Activated CD4-positive, alpha-beta T cell treated with anti-CD3 and anti-CD28 coated beads for 36 hours (primary cell): ENCODE measurements at regions of chr17 and their contacts with region 1.

Region 1: DNA sequence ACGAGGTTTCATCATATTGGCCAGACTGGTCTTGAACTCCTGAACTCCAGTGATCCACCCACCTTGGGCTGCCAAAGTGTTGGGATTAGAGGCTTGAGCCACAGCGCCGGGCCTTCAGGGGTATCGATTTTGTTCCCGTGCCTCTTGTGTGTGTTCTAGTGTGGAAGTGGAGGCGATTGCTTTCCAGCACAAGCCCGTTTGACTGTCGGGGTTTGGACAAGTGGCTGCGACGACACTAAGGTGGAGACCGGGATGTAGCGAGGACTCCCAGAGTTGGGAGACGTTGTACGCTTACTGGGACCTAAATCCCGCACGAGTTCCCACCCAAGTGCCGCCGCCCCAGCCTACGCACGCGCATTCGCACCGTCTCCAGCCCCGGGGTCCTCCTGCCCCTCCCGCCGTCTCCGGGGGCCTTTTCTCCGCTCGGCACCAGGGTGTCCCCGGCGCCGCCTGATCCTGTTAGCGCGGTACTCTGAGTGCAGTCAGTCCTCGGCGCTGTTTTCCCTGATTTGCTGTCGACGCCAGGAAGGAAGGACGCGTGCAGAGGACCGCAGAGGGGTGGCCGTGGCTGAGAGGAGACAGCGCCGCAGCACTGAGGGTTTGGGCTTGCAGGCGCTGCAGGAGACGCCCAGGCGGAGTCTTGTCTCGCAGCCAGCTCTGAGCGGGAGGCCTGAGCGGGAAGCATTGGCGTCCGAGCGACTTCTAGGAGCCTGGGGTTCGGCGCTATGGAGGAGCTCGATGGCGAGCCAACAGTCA is at the start of gene NUP85:
- DNase-seq: peak; percentile 96
- ATAC-seq: peak; percentile 86
- H3K4me3 Mint-ChIP-seq: peak within 1 kb of the TSS; percentile 91
- H3K27ac Mint-ChIP-seq: peak within 1 kb of the TSS; percentile 100
- H3K4me1 Mint-ChIP-seq: peaks cover 18% of the 10 kb centered on the region
- H3K27me3 Mint-ChIP-seq: no peaks in the 10 kb centered on the region
- total RNA-seq, gene NUP85: 130 to 160 TPM

Region 2: DNA sequence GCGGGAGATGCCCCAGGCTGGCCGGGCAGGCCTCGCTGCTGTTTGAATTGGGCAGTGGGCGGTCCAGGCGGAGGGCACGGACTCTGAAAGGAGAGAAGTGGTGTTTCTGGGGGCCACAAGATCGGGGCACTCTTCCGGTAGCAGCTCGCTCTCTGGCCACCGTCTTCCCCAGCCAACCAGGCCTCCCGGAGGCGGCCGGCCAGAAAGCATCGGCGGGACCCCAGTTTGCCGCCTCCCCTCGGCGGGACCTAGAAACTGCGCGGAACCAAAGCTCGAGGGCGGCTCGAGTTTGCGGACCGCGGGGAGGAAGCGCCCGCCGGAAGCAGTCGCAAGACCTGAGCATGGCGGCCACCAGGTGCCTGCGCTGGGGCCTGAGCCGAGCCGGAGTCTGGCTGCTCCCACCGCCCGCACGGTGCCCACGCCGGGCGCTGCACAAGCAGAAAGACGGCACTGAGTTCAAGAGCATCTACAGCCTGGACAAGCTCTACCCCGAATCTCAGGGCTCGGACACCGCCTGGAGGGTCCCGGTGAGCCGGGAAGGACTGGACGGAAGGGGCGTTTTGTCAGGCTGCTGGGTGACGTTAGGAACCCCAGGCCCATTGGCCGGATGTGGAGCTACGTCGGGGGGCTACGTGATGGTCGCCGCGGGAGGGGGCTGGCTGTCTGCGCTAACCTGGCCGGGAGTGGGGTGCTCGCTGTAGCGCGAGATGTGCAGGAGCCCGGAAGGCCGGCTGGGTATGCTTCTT is 192.7 kb before region 1 on chr17 and contains the start of gene MRPL58:
- CTCF ChIA-PET with region 1: interaction called, 3 read pairs
- POLR2A ChIA-PET with region 1: interaction called, 12 read pairs
- intact Hi-C with region 1: no loop called
- DNase-seq: peak; percentile 91
- ATAC-seq: peak; percentile 96
- H3K4me3 Mint-ChIP-seq: peak within 1 kb of the TSS; percentile 95
- H3K27ac Mint-ChIP-seq: peak within 1 kb of the TSS; percentile 92
- H3K4me1 Mint-ChIP-seq: peaks cover 31% of the 10 kb centered on the region
- H3K27me3 Mint-ChIP-seq: no peaks in the 10 kb centered on the region
- total RNA-seq, gene MRPL58: 64.6 to 66.5 TPM

Region 3: DNA sequence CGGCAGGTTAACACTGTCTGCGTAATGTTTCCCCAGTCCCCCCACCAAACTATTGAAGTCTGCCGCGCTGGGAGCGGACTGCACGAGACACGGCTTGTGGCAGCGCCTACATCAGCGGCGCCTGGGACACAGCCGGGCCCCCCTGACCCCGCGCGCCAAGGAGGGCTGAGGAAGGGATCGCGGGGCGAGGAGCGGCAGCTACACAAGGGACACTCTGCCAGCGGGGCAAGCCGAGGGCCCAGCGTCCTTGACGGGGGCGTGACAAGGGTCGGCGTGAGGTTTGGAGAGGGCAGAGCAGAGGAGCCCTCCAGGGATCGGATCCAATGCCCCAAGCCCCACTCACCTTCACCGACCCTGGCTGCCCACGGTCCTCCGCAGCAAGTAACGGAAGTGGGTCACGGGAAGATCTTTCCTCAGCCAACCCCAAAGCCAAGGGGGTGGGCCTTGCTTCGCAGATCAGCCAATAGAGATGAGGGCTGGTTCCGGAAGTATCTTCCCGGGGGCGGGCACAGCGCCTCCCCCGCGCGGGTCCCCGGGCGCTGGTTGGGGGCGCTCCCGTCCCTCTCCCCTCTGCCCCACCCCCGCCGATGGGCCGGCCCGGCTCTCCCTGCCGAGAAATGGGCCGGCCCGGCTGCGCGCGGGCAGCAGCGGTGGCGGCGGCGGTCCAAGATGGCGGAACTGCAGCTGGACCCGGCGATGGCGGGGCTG is 158.5 kb before region 1 on chr17 and contains the starts of genes ATP5PD and KCTD2:
- CTCF ChIA-PET with region 1: interaction called, 5 read pairs
- POLR2A ChIA-PET with region 1: no interaction called
- intact Hi-C with region 1: loop called (anchors 1 to 5 kb)
- DNase-seq: peak; percentile 97
- ATAC-seq: peak; percentile 95
- H3K4me3 Mint-ChIP-seq: peak within 1 kb of the TSS; percentile 99
- H3K27ac Mint-ChIP-seq: peak within 1 kb of the TSS; percentile 94
- H3K4me1 Mint-ChIP-seq: peaks cover 37% of the 10 kb centered on the region
- H3K27me3 Mint-ChIP-seq: no peaks in the 10 kb centered on the region
- total RNA-seq, gene ATP5PD: 194 to 237 TPM
- total RNA-seq, gene KCTD2: 15.3 to 16.7 TPM

Region 4: DNA sequence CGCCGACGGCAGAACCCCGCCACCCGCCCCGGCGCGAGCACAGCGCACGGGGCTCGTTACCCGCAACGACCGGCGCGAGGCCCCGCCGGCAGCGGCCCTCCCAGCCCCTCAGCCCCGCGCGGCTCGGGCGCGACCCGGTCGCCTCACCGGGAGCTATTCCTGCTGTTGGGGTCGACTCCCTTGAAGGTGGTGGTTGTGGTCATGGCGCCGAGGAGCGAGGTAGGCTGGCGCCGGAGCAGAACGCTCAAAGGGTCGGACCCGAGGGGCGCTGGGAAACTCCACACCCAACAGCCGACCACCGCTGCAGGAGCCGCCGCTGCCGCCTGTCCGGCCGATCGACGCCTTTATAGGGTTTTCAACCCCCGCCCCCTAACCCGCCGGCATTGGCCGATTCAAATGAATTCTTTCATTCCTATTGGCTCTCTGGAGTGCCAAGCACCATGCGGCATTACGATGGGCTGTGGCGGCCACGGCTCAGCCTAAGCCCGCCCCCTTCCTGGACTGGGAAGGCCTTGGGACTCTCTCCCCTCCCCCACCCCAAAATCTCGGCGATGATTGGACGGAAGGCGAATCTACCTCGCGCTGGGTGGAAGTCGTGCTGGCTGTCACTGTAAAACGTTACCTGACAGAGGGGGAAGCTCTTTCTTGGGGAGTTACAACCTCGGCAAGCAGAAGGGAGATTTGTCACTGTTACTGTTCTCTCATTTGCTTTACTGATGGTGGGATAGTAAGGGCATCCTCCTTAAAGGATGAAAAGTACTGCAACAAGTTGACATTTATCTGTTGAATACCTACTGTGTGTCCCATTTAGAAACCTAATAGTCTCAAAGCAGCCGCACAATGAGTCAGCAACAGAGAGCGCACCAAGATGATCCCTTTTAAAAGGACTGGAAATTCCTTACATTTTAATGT is 50.8 kb before region 1 on chr17 and contains the start of gene JPT1:
- CTCF ChIA-PET with region 1: interaction called, 3 read pairs
- POLR2A ChIA-PET with region 1: interaction called, 3 read pairs
- intact Hi-C with region 1: loop called in 1 of 2 experiments (anchors 1 kb)
- DNase-seq: peak; percentile 99
- ATAC-seq: peak; percentile 98
- H3K4me3 Mint-ChIP-seq: peak within 1 kb of the TSS; percentile 96
- H3K27ac Mint-ChIP-seq: peak within 1 kb of the TSS; percentile 89
- H3K4me1 Mint-ChIP-seq: peaks cover 36% of the 10 kb centered on the region
- H3K27me3 Mint-ChIP-seq: no peaks in the 10 kb centered on the region
- total RNA-seq, gene JPT1: 234 to 238 TPM

Region 5: GRCh38 chr17:75191584-75191983 is 13.6 kb before region 1 on chr17:
- CTCF ChIA-PET with region 1: interaction called, 42 read pairs
- POLR2A ChIA-PET with region 1: interaction called, 4 read pairs
- intact Hi-C with region 1: loop called in 1 of 2 experiments (anchors 1 kb)
- DNase-seq: no peak
- ATAC-seq: no peak
- H3K4me3 Mint-ChIP-seq: no peak overlapping the region
- H3K27ac Mint-ChIP-seq: no peak overlapping the region
- H3K4me1 Mint-ChIP-seq: peaks cover 12% of the 10 kb centered on the region
- H3K27me3 Mint-ChIP-seq: no peaks in the 10 kb centered on the region

Region 6: DNA sequence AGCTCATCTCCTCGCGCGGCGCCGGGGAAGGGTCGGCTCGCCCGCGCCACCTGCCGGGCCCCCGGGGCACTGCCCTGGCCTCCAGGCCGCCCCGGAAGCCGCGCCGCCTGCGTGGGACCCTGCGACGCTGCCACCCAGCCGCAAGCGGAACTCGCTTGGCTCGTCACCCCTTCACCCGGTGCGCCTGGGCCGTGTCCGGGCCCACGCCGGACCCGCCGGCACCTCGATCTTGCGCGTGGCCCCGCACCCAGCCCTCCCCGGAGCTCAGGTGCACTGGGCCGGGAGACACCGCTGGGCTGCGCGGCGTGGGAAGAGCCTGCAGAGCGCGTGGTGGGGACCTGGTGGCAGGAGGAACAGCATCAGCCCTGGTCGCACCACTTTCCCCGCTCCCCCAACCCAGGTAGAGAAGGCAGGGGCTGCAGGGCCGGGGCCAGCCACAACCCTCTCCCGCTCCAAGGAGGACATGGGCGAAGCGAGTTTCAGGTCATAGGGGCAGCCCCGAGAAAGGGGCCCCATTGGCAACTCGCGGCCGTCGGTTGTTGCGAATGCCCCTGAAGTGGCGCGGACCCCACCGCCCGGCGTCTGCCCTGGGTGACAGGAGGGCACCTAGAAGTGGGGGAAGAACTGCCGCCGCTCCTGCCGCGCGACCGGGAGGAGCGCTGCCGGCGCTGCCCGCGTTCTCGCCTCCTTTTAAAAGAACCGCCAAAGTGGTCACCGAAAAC is 66.2 kb after region 1 on chr17:
- CTCF ChIA-PET with region 1: interaction called, 4 read pairs
- POLR2A ChIA-PET with region 1: no interaction called
- intact Hi-C with region 1: loop called in 1 of 2 experiments (anchors 1 kb)
- DNase-seq: peak; percentile 93
- ATAC-seq: peak; percentile 79
- H3K4me3 Mint-ChIP-seq: peak overlapping the region; percentile 80
- H3K27ac Mint-ChIP-seq: peak overlapping the region; percentile 81
- H3K4me1 Mint-ChIP-seq: peaks cover 21% of the 10 kb centered on the region
- H3K27me3 Mint-ChIP-seq: no peaks in the 10 kb centered on the region

Region 7: GRCh38 chr17:75456417-75457046 is 251.3 kb after region 1 on chr17 and contains the start of gene TMEM94:
- CTCF ChIA-PET with region 1: no interaction called
- POLR2A ChIA-PET with region 1: no interaction called
- intact Hi-C with region 1: loop called in 1 of 2 experiments (anchors 1 kb)
- DNase-seq: peak; percentile 95
- ATAC-seq: peak; percentile 99
- H3K4me3 Mint-ChIP-seq: peak within 1 kb of the TSS; percentile 89
- H3K27ac Mint-ChIP-seq: peak within 1 kb of the TSS; percentile 92
- H3K4me1 Mint-ChIP-seq: peaks cover 24% of the 10 kb centered on the region
- H3K27me3 Mint-ChIP-seq: no peaks in the 10 kb centered on the region
- total RNA-seq, gene TMEM94: 51.4 to 62.5 TPM

Region 8: DNA sequence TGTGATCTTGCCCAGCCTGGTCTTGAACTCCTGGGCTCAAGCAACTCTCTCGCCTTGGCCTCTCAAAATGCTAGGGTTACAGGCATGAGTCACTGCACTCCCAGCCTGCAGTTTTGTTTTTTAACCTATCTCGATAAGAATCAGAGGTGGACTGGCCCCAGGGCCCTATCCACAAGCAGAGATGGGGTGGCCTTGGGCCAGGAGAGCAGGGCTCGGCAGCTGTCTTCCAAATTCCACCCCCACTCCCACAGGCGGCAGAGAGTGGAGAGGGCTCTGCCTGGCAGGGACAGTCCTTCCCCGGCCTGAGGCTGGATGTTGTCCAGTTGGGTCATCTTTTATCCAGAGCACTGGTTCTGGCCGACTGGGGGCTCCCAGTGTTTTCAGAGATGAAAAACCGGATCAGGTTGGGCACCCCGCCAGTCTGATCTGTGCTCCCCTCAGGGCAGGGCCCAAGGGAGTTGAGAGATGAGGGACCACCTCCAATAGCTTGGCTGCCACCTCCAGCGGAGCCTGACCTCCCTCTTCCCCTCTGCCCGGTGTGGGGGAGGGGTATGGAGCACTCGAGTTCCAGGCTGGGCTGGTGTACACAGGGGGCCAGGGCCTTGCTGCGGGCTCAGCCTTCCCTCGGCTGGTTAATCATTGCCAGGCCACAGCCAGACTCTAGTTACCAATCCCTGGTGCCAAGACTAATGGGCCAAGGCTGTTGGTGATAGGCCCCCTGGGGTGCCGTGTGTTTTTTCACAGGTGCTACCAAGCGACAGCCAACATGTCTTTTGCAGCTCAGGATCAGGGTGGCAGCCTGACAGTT is 352.1 kb after region 1 on chr17:
- CTCF ChIA-PET with region 1: no interaction called
- POLR2A ChIA-PET with region 1: no interaction called
- intact Hi-C with region 1: no loop called
- DNase-seq: no peak
- ATAC-seq: no peak
- H3K4me3 Mint-ChIP-seq: no peak overlapping the region
- H3K27ac Mint-ChIP-seq: no peak overlapping the region
- H3K4me1 Mint-ChIP-seq: no peaks in the 10 kb centered on the region
- H3K27me3 Mint-ChIP-seq: no peaks in the 10 kb centered on the region